Lower leg skin (tissue), 4 donors: ENCODE measurements at regions of chr10 and their contacts with region 1.

Region 1: GRCh38 chr10:5548527-5549223 is 23.9 kb downstream of the CALML3 start:
- DNase-seq: peak in 1 of 2 donors; percentile 75
- H3K4me3 ChIP-seq: no peak overlapping the region
- CTCF ChIP-seq: no peak
- POLR2A ChIP-seq: no peak

Region 2: DNA sequence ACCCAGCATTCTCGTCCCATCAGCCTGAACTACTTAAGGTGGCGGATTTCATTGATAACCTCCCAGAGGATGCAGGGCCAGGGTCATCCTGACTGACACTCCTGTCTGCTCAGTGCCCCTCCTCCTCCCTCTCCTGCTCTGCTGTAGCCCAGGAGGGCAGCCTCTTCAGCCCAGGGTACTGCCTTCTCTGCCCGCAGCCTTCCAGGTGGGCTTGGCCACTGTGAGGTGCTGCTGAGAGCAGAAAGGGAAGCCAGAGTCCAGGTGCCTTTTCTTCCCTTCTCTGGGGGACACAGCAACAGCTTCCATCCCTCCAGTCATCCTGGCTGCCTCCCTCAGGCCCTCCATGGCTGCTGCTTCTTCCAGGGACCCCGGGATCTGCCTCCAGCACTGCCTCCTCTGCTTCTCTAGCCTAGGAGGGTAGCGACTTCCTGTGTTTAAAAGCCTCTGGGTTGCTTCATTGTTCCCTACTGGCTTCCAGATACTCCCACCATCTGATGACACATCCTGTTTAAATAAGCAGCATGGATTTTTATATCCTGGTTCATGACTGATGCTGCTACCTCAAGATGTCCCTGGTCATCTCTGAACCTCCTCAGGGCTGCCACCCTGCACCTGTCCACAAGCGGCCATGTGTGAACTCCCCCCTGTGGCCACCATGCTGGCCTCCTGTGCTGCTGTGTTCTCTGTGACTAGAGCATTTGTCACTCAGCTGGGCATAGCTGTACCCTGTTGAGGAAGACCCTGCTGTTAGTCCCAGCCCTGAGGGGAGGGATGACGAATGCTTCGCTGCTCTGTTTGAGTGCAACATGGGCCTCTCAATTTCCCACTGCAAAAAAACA is 296.3 kb before region 1 on chr10:
- intact Hi-C with region 1: no loop called
- DNase-seq: no peak
- H3K4me3 ChIP-seq: no peak overlapping the region
- CTCF ChIP-seq: no peak
- POLR2A ChIP-seq: no peak

Region 3: GRCh38 chr10:5317547-5318107 is 231.0 kb before region 1 on chr10:
- intact Hi-C with region 1: no loop called
- DNase-seq: no peak
- H3K4me3 ChIP-seq: no peak overlapping the region
- CTCF ChIP-seq: no peak
- POLR2A ChIP-seq: no peak

Region 4: DNA sequence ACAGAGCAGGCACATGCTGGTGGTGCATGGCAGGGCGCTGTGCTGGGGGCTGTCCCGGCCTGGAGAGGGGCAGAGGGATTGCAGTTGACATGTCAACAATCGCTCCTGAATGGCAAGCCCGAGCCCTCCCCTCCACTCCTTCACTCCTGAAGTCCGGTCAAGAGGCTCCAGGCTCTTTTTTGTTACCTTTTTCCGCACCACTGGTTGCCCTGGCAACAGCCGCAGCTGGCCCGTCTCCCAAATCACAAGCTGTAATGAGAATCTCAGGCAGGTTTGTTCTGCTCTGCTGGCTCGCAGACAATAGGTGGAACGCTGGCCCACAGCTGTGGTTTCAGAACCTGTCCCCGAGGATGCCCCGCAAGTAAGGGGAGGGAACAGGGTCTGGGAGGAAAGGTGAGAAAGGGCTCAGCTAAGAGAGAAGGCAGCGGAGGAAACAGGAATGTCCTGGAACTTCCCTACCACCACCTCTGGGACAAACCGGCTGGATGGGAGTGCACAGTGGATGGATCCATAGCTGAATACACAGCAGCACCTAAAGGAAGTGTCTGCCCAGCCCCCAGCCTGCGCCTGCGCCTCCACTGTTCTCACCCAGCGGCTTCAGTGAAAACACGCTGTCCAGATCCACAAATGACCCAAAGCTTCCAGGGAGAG is 35.0 kb after region 1 on chr10:
- intact Hi-C with region 1: loop called (anchors 2 kb)
- DNase-seq: no peak
- H3K4me3 ChIP-seq: no peak overlapping the region
- CTCF ChIP-seq: no peak
- POLR2A ChIP-seq: no peak

Region 5: GRCh38 chr10:5595591-5596590 is 47.2 kb after region 1 on chr10:
- intact Hi-C with region 1: no loop called
- DNase-seq: no peak
- H3K4me3 ChIP-seq: no peak overlapping the region
- CTCF ChIP-seq: no peak
- POLR2A ChIP-seq: no peak